T-cell (primary cell): ENCODE measurements at regions of chr1 and their contacts with region 1.

Region 1: GRCh38 chr1:159891275-159892157 is 8.4 kb downstream of the CFAP45 start:
- DNase-seq: peak; percentile 39 to 88 (median 68)
- ATAC-seq: peak; percentile 91 to 98 (median 96)
- H3K4me3 ChIP-seq: no peak overlapping the region
- H3K4me3 Mint-ChIP-seq: no peak overlapping the region
- H3K27ac ChIP-seq: no peak overlapping the region
- H3K27ac Mint-ChIP-seq: peak overlapping the region in 1 of 2 donors; percentile 3
- H3K4me1 ChIP-seq: peaks cover 0 to 21% of the 10 kb centered on the region in 2 experiments
- H3K4me1 Mint-ChIP-seq: peaks cover 5 to 21% (median 17%) of the 10 kb centered on the region in 3 donors
- H3K27me3 ChIP-seq: no peaks in the 10 kb centered on the region
- H3K27me3 Mint-ChIP-seq: no peaks in the 10 kb centered on the region

Region 2: DNA sequence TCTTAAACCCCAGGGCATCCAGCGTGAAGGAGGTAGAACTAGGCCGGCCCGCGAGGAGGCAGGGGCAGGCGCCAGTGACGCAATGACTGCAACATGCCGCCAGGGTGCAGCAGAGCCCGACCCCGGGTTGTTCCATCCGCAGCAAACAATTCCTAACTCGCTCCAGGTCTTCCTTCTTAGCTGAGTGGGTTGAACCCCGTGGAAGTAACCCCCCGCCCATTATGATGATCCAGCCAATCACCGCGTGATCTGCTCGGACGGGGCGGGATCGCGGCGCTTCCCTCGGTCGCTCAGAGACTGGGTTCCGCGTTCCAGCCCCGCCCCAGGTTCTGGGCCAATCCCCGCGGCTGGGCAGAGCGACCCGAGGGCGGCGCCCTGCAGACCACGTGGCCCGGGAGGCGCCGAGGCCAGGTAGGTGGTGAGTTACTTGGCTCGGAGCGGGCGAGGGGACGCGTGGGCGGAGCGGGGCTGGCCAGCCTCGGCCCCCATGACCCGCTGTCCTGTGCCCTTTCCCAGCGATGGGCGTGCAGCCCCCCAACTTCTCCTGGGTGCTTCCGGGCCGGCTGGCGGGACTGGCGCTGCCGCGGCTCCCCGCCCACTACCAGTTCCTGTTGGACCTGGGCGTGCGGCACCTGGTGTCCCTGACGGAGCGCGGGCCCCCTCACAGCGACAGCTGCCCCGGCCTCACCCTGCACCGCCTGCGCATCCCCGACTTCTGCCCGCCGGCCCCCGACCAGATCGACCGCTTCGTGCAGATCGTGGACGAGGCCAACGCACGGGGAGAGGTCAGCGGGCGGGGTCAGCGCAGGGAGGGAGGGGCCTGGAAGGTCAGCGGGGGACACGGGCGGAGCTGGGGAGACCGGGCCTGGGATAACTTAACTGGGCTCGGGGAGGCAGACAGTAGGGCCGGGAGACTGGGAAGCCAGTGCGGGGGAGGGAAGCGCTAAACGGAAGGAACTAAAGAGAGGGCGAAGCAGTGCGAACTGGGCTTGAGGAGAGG is 110.6 kb before region 1 on chr1 and contains the start of gene DUSP23:
- CTCF ChIA-PET with region 1: interaction called, 4 to 18 read pairs
- POLR2A ChIA-PET with region 1: no interaction called
- DNase-seq: peak; percentile 89 to 98 (median 92)
- ATAC-seq: peak; percentile 95 to 98 (median 96)
- H3K4me3 ChIP-seq: peak within 1 kb of the TSS; percentile 48 to 56
- H3K4me3 Mint-ChIP-seq: peak within 1 kb of the TSS; percentile 77 to 81 (median 78)
- H3K27ac ChIP-seq: peak within 1 kb of the TSS; percentile 48
- H3K27ac Mint-ChIP-seq: peak within 1 kb of the TSS; percentile 73 to 84
- H3K4me1 ChIP-seq: peaks cover 7 to 16% of the 10 kb centered on the region in 2 experiments
- H3K4me1 Mint-ChIP-seq: peaks cover 23 to 50% (median 47%) of the 10 kb centered on the region in 3 donors
- H3K27me3 ChIP-seq: no peaks in the 10 kb centered on the region
- H3K27me3 Mint-ChIP-seq: no peaks in the 10 kb centered on the region
- total RNA-seq, gene DUSP23: 8.8 to 17.1 (median 14.3) TPM

Region 3: GRCh38 chr1:159798893-159799292 is 92.6 kb before region 1 on chr1:
- CTCF ChIA-PET with region 1: interaction called, 62 to 75 read pairs
- POLR2A ChIA-PET with region 1: no interaction called
- DNase-seq: peak in 27 of 35 experiments; percentile 7 to 73 (median 33)
- ATAC-seq: peak; percentile 33 to 64 (median 48)
- H3K4me3 ChIP-seq: no peak overlapping the region
- H3K4me3 Mint-ChIP-seq: no peak overlapping the region
- H3K27ac ChIP-seq: no peak overlapping the region
- H3K27ac Mint-ChIP-seq: no peak overlapping the region
- H3K4me1 ChIP-seq: peaks cover 12 to 34% of the 10 kb centered on the region in 2 experiments
- H3K4me1 Mint-ChIP-seq: peaks cover 24 to 38% (median 30%) of the 10 kb centered on the region in 3 donors
- H3K27me3 ChIP-seq: peaks cover 0 to 5% of the 10 kb centered on the region in 2 experiments
- H3K27me3 Mint-ChIP-seq: peaks cover 2 to 8% of the 10 kb centered on the region in 2 donors

Region 4: DNA sequence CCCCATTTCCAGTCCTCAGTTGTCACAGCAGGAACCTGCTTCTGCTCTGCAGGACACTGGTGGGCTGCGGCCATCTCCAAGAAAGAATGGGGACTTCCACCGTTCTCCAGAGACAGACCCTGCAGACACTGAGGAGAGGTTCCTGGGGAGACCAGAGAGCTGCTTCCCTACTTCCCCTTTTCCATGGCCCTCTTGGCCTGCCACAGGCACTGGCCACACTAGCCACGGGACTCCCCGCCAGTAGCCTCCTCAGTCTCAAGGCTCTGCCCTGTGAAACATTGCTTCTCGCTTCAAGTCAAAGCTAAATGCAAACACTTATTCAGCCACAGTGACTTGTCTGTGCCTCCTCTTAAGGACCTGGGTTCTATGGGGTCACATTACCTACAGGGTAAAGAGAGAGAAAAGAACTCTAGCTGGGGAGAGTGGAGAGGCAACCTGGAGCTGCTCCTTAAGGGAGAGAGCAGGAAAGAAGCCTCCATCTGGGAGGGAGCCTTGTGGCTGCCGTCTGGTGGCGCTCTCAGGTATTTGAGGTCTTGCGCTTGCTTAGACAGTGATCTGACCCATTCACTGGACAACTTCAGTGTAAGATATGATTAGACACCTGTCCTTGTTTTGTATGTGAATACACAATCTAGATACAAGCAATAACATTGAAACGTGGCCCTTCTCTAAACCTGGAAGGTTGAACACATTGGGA is 70.2 kb before region 1 on chr1:
- CTCF ChIA-PET with region 1: no interaction called
- POLR2A ChIA-PET with region 1: interaction called, 3 to 10 read pairs
- DNase-seq: peak in 4 of 35 experiments; percentile 7 to 39 (median 24)
- ATAC-seq: no peak
- H3K4me3 ChIP-seq: no peak overlapping the region
- H3K4me3 Mint-ChIP-seq: no peak overlapping the region
- H3K27ac ChIP-seq: no peak overlapping the region
- H3K27ac Mint-ChIP-seq: no peak overlapping the region
- H3K4me1 ChIP-seq: peaks cover 10 to 47% of the 10 kb centered on the region in 2 experiments
- H3K4me1 Mint-ChIP-seq: peaks cover 19 to 25% (median 20%) of the 10 kb centered on the region in 3 donors
- H3K27me3 ChIP-seq: peaks cover 0 to 3% of the 10 kb centered on the region in 2 experiments
- H3K27me3 Mint-ChIP-seq: no peaks in the 10 kb centered on the region

Region 5: DNA sequence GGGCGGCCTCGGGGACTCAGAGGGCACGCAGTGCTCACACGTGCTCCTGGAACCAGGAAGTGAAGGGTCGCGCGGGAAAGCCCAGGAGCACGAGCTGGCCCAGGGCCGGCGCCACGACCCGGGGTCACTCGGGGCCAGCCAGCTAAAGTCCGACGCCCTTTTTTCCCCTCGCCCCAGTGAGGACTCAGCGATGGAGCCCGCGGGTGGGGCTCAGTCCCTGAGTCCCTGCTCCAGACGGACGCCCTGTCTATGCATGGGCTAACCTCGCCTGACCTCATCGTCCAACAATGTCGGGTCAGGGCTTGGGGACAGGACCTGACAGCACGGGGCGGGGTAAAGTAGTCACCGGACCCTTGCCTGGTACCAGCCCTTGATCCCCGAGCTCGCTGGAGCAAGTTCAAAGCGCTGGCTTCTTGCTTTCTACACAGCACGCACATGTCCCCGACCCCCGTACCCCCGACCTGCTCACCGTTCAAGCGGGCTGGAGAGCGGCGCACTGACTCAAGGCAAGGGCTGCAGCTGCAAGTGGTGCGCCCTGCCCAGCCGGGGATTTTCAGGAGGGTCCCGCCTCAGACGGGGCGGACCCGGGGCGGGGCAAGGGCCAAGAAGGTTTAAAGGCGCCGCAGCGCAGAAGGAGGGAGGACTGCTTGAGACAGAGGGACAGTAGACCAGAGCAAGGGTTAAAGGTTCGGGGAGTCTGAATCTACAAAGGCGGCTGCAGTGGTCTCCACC is 33.6 kb after region 1 on chr1 and contains the start of gene TAGLN2:
- CTCF ChIA-PET with region 1: interaction called, 6 to 8 read pairs
- POLR2A ChIA-PET with region 1: interaction called, 6 to 18 read pairs
- DNase-seq: peak; percentile 74 to 93 (median 86)
- ATAC-seq: peak; percentile 56 to 77 (median 76)
- H3K4me3 ChIP-seq: peak within 1 kb of the TSS; percentile 71 to 91
- H3K4me3 Mint-ChIP-seq: peak within 1 kb of the TSS; percentile 89 to 96 (median 91)
- H3K27ac ChIP-seq: peak within 1 kb of the TSS; percentile 99
- H3K27ac Mint-ChIP-seq: peak within 1 kb of the TSS; percentile 97 to 100
- H3K4me1 ChIP-seq: peaks cover 21 to 53% of the 10 kb centered on the region in 2 experiments
- H3K4me1 Mint-ChIP-seq: peaks cover 46 to 60% (median 51%) of the 10 kb centered on the region in 3 donors
- H3K27me3 ChIP-seq: no peaks in the 10 kb centered on the region
- H3K27me3 Mint-ChIP-seq: no peaks in the 10 kb centered on the region
- total RNA-seq, gene TAGLN2: 210 to 372 (median 245) TPM

Region 6: GRCh38 chr1:159945483-159946241 is 54.1 kb after region 1 on chr1 and contains the start of gene IGSF9:
- CTCF ChIA-PET with region 1: interaction called, 5 to 15 read pairs
- POLR2A ChIA-PET with region 1: interaction called in 1 of 2 experiments, 8 read pairs
- DNase-seq: peak; percentile 50 to 86 (median 77)
- ATAC-seq: peak; percentile 93 to 98 (median 98)
- H3K4me3 ChIP-seq: peak within 1 kb of the TSS; percentile 30 to 32
- H3K4me3 Mint-ChIP-seq: peak within 1 kb of the TSS; percentile 51 to 74 (median 62)
- H3K27ac ChIP-seq: no peak within 1 kb of the TSS
- H3K27ac Mint-ChIP-seq: peak within 1 kb of the TSS in 1 of 2 donors; percentile 38
- H3K4me1 ChIP-seq: peaks cover 0 to 13% of the 10 kb centered on the region in 2 experiments
- H3K4me1 Mint-ChIP-seq: peaks cover 7 to 13% (median 12%) of the 10 kb centered on the region in 3 donors
- H3K27me3 ChIP-seq: peaks cover 0 to 60% of the 10 kb centered on the region in 2 experiments
- H3K27me3 Mint-ChIP-seq: peaks cover 30 to 42% of the 10 kb centered on the region in 2 donors
- total RNA-seq, gene IGSF9: 0.06 to 0.16 (median 0.12) TPM in 3 of 5 donors, not detected in the others

Region 7: GRCh38 chr1:160006312-160006940 is 114.9 kb after region 1 on chr1:
- CTCF ChIA-PET with region 1: interaction called, 9 to 11 read pairs
- POLR2A ChIA-PET with region 1: no interaction called
- DNase-seq: peak; percentile 38 to 83 (median 66)
- ATAC-seq: peak; percentile 75 to 85 (median 83)
- H3K4me3 ChIP-seq: no peak overlapping the region
- H3K4me3 Mint-ChIP-seq: no peak overlapping the region
- H3K27ac ChIP-seq: no peak overlapping the region
- H3K27ac Mint-ChIP-seq: no peak overlapping the region
- H3K4me1 ChIP-seq: no peaks in the 10 kb centered on the region
- H3K4me1 Mint-ChIP-seq: no peaks in the 10 kb centered on the region
- H3K27me3 ChIP-seq: peaks cover 2 to 14% of the 10 kb centered on the region in 2 experiments
- H3K27me3 Mint-ChIP-seq: peaks cover 10 to 12% of the 10 kb centered on the region in 2 donors